Activated CD8-positive, alpha-beta memory T cell treated with anti-CD3 and anti-CD28 coated beads, Interleukin-2, amount 10 ng/mL, durations not matched to agents 7 days and 5 days (primary cell): ENCODE measurements at regions of chr4 and their contacts with region 1.

Region 1: DNA sequence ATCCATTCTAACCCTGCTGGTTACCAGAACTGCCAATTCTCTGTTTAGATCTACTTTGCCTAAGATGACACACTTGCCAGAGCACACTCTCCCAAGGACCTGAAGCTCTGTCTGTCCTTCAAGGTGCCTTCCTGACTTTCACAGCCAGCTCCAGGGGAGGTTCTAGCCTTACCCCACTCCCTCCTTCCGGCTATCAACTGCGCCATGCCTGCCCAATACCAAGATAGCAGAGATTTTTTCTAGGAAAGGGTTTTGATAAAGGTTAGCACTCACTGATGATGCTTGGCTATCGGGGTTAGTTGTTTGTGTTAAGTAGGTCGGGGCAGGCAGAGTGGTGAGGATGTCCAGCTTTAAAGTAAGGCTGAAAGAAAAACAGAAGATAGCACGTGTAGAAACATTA is 14.3 kb downstream of the ALPK1 start:
- DNase-seq: no peak
- ATAC-seq: no peak
- H3K4me3 Mint-ChIP-seq: no peak overlapping the region
- H3K27ac Mint-ChIP-seq: no peak overlapping the region
- H3K4me1 Mint-ChIP-seq: peaks cover 7% of the 10 kb centered on the region
- H3K27me3 Mint-ChIP-seq: no peaks in the 10 kb centered on the region

Region 2: GRCh38 chr4:112257098-112257497 is 54.4 kb before region 1 on chr4:
- CTCF ChIA-PET with region 1: no interaction called
- DNase-seq: no peak
- ATAC-seq: no peak
- H3K4me3 Mint-ChIP-seq: no peak overlapping the region
- H3K27ac Mint-ChIP-seq: no peak overlapping the region
- H3K4me1 Mint-ChIP-seq: no peaks in the 10 kb centered on the region
- H3K27me3 Mint-ChIP-seq: no peaks in the 10 kb centered on the region

Region 3: GRCh38 chr4:112321776-112322684 is 10.5 kb after region 1 on chr4:
- CTCF ChIA-PET with region 1: interaction called, 23 read pairs
- DNase-seq: peak; percentile 84
- ATAC-seq: peak; percentile 68
- H3K4me3 Mint-ChIP-seq: no peak overlapping the region
- H3K27ac Mint-ChIP-seq: no peak overlapping the region
- H3K4me1 Mint-ChIP-seq: peaks cover 26% of the 10 kb centered on the region
- H3K27me3 Mint-ChIP-seq: no peaks in the 10 kb centered on the region

Region 4: GRCh38 chr4:112492321-112492720 is 180.8 kb after region 1 on chr4:
- CTCF ChIA-PET with region 1: no interaction called
- DNase-seq: no peak
- ATAC-seq: no peak
- H3K4me3 Mint-ChIP-seq: no peak overlapping the region
- H3K27ac Mint-ChIP-seq: no peak overlapping the region
- H3K4me1 Mint-ChIP-seq: no peaks in the 10 kb centered on the region
- H3K27me3 Mint-ChIP-seq: peaks cover 2% of the 10 kb centered on the region